ENCODE measurements at regions of chr14 and their contacts with region 1.

Region 1: GRCh38 chr14:81453166-81453766 is 53.1 kb upstream of the STON2 start:
- DNase-seq: peak; percentile 41 to 60
- ATAC-seq: peak; percentile 79 to 87
- H3K4me3 ChIP-seq: no peak overlapping the region
- H3K27ac ChIP-seq: no peak overlapping the region
- H3K4me1 ChIP-seq: no peaks in the 10 kb centered on the region
- CTCF ChIP-seq: peak; percentile 80
- EP300 ChIP-seq: no peak
- POLR2A ChIP-seq: no peak
- RAD21 ChIP-seq: peak; percentile 80 to 82

Region 2: DNA sequence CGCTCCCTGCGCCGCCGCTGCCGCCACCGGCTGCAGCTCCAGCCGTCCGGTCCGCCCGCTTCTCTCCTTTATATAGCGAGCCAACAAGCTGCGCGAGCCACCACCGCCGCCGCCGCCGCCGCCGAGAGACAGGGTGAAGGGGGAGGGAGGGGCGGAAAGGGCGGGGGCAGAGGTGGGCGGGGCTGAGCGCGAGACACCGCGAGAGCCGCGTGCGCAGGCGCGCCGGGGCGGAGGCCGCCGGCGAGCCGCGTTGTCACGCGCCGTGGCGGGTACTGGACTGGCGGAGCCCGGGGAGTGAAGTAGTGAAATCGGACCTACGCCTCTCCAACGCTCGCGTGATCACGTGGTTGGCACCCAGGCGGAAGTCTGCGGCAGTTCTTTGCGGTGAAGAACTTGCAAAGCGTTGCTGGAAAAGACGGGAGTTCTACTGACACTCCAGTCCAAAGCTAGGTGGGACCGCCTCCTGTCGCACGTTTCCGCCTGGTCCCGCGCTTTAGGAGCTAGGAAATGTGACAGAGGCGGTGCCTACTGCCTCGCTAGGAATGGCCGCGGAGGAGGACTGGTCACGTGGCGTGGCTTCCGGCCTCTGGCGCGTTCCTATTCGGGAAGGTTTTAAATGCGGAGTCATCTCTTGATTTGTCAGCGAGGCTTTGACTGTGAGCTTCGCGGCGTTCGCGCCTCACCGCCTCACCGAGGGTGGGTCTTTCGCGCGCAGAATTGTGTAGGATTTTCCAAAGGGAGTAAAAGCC is 232.3 kb before region 1 on chr14 and contains the start of gene GTF2A1:
- CTCF ChIA-PET with region 1: no interaction called
- POLR2A ChIA-PET with region 1: interaction called, 13 read pairs
- DNase-seq: peak; percentile 80 to 96
- ATAC-seq: peak; percentile 82 to 88
- H3K4me3 ChIP-seq: peak within 1 kb of the TSS; percentile 89
- H3K27ac ChIP-seq: peak within 1 kb of the TSS; percentile 96
- H3K4me1 ChIP-seq: peaks cover 24% of the 10 kb centered on the region
- CTCF ChIP-seq: no peak
- EP300 ChIP-seq: no peak
- POLR2A ChIP-seq: peak; percentile 99
- RAD21 ChIP-seq: no peak
- polyA plus RNA-seq, gene GTF2A1: 19.6 and 22.4 TPM in 2 replicates

Region 3: DNA sequence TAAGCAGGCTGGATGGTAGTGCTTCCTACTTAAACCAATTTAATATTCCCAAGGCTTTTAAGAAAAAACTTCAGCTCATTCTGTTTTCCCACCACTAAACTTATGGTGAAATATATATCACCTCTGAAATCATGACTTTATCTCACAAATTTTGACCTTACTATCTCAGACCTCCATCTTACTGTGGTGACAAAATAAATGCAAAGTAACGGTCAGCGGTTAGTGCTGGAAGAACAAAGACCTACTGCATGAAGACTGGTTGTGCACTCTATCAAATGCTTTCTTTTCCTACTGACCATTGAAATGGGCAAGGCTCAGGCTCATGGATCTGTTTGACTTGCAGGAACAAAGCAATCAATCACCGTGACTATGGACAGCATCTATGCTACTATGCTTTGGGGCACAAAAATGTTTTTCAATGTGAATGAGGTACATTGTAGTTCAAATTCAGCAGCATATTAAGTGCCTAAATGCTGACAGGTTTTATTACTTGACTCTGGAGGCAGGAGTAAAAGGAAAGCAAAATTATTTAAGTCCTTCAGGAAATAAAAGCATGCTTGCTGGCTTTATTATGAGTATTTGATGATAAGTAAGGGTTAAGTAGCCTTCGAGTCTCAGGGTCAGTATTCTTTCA is 189.4 kb before region 1 on chr14:
- CTCF ChIA-PET with region 1: interaction called, 180 read pairs
- POLR2A ChIA-PET with region 1: no interaction called
- DNase-seq: no peak
- ATAC-seq: no peak
- H3K4me3 ChIP-seq: no peak overlapping the region
- H3K27ac ChIP-seq: no peak overlapping the region
- H3K4me1 ChIP-seq: no peaks in the 10 kb centered on the region
- CTCF ChIP-seq: no peak
- EP300 ChIP-seq: no peak
- POLR2A ChIP-seq: no peak
- RAD21 ChIP-seq: no peak

Region 4: GRCh38 chr14:81269100-81269978 is 183.9 kb before region 1 on chr14:
- CTCF ChIA-PET with region 1: interaction called, 180 read pairs
- POLR2A ChIA-PET with region 1: no interaction called
- DNase-seq: peak; percentile 68 to 77
- ATAC-seq: peak; percentile 92 to 93
- H3K4me3 ChIP-seq: no peak overlapping the region
- H3K27ac ChIP-seq: no peak overlapping the region
- H3K4me1 ChIP-seq: no peaks in the 10 kb centered on the region
- CTCF ChIP-seq: peak; percentile 77
- EP300 ChIP-seq: no peak
- POLR2A ChIP-seq: no peak
- RAD21 ChIP-seq: peak; percentile 78

Region 5: GRCh38 chr14:81276073-81277069 is 176.9 kb before region 1 on chr14:
- CTCF ChIA-PET with region 1: interaction called, 180 read pairs
- POLR2A ChIA-PET with region 1: no interaction called
- DNase-seq: no peak
- ATAC-seq: no peak
- H3K4me3 ChIP-seq: no peak overlapping the region
- H3K27ac ChIP-seq: no peak overlapping the region
- H3K4me1 ChIP-seq: no peaks in the 10 kb centered on the region
- CTCF ChIP-seq: no peak
- EP300 ChIP-seq: no peak
- POLR2A ChIP-seq: no peak
- RAD21 ChIP-seq: no peak

Region 6: GRCh38 chr14:81289516-81289915 is 163.8 kb before region 1 on chr14:
- CTCF ChIA-PET with region 1: interaction called, 11 read pairs
- POLR2A ChIA-PET with region 1: no interaction called
- DNase-seq: no peak
- ATAC-seq: no peak
- H3K4me3 ChIP-seq: no peak overlapping the region
- H3K27ac ChIP-seq: no peak overlapping the region
- H3K4me1 ChIP-seq: no peaks in the 10 kb centered on the region
- CTCF ChIP-seq: no peak
- EP300 ChIP-seq: no peak
- POLR2A ChIP-seq: no peak
- RAD21 ChIP-seq: no peak

Region 7: GRCh38 chr14:81509822-81510451 is 56.7 kb after region 1 on chr14:
- CTCF ChIA-PET with region 1: no interaction called
- POLR2A ChIA-PET with region 1: no interaction called
- DNase-seq: no peak
- ATAC-seq: no peak
- H3K4me3 ChIP-seq: no peak overlapping the region
- H3K27ac ChIP-seq: no peak overlapping the region
- H3K4me1 ChIP-seq: peaks cover 23% of the 10 kb centered on the region
- CTCF ChIP-seq: no peak
- EP300 ChIP-seq: no peak
- POLR2A ChIP-seq: no peak
- RAD21 ChIP-seq: no peak

Measured in A549 (cell line).